H1 (cell line): ENCODE measurements at regions of chr6 and their contacts with region 1.

Region 1: DNA sequence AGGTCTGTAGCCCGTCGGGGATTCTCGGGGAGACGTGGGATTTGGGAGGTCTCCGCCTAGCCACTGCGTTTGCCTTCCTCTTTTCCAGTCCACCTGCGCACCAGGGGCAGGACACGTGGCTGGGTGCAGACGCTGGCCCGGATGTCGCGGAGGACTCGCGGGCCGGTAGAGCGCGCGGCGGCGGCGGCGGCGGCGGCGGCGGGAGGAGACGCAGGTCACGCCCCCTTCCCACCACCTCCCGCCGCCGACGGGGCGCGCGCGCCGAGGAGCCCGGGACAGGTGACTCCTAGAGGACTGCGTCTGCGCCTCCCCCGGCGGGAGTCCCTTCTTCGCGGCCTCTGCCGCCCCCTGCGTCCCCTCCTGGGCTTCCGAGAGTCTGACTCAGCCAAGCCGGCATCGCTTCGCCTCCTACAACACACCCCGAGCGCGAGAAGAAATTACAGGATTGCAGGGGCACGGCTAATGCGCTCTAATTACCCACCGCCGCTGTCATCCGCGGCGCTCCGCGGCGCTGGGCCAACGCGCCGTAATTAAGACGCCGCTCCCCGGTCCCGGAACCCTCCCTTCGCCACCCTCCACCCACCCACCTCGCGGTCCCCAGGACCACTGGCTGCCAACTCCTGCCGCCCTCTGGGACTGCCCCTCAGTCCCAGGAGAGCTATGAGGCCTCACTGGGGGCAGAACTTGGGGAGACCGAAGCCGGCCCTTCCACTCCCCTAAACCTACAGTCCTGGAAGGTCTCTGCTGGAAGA is 124.5 kb downstream of the MRPL14 start:
- DNase-seq: peak; percentile 44 to 86
- H3K4me3 ChIP-seq: peak overlapping the region; percentile 22 to 60 (median 37); a peak in 7 of 8 replicates
- H3K27ac ChIP-seq: peak overlapping the region; percentile 20; the same call in 1 of the 2 replicates
- H3K4me1 ChIP-seq: peaks cover 4 to 48% (median 38%) of the 10 kb centered on the region in 4 experiments
- H3K27me3 ChIP-seq: peaks cover 0 to 18% (median 9%) of the 10 kb centered on the region in 4 experiments; a peak in 5 of 7 replicates
- CTCF ChIP-seq: peak in 1 of 3 experiments; percentile 5; a peak in 2 of 4 replicates
- EP300 ChIP-seq: peak in 1 of 2 experiments; percentile 2; a peak in 1 of 3 replicates
- POLR2A ChIP-seq: no peak
- RAD21 ChIP-seq: peak in 1 of 2 experiments; percentile 17; a peak in 1 of 4 replicates

Region 2: DNA sequence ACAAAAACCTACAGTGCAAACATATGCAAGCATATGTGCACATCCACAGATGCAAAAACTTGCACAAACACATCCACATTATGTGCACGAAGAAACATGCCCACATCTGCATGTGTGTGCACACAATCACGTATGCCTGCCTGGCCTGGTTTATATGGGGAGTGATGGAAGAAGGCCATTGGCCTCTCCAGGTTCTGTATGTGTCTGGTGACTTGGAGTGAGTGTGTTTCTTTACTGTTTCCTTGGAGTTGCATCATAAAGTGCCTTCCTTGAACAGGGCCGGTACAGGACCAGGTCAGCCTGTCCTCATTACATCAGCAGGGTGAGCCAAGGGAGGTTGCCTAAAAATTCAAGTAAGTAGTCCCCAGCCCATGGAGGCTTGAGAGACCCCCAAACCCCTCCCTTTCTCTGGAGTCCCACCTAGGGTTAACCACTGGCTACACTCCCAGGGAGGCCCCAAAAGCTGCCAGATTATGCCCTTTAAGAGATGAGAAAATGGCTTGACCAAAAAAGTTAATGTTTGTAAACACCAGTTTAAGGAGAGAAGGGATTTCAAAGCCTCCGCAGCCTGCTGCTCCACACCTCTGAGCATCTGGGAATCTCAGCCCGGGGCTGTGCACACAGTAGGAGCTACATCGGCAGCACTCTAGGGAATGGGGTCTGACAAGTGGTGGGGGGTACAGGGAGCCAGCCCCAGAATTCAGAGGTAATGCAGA is 92.0 kb before region 1 on chr6:
- CTCF ChIA-PET with region 1: interaction called, 11 read pairs
- POLR2A ChIA-PET with region 1: no interaction called
- DNase-seq: no peak
- H3K4me3 ChIP-seq: no peak overlapping the region
- H3K27ac ChIP-seq: no peak overlapping the region
- H3K4me1 ChIP-seq: peaks cover 0 to 20% (median 11%) of the 10 kb centered on the region in 4 experiments; a peak in 6 of 7 replicates
- H3K27me3 ChIP-seq: no peaks in the 10 kb centered on the region
- CTCF ChIP-seq: no peak
- EP300 ChIP-seq: no peak
- POLR2A ChIP-seq: no peak
- RAD21 ChIP-seq: no peak

Region 3: GRCh38 chr6:43977404-43978111 is 25.2 kb before region 1 on chr6:
- CTCF ChIA-PET with region 1: interaction called, 19 read pairs
- POLR2A ChIA-PET with region 1: no interaction called
- DNase-seq: peak in 1 of 2 experiments; percentile 19
- H3K4me3 ChIP-seq: no peak overlapping the region
- H3K27ac ChIP-seq: no peak overlapping the region
- H3K4me1 ChIP-seq: no peaks in the 10 kb centered on the region
- H3K27me3 ChIP-seq: no peaks in the 10 kb centered on the region
- CTCF ChIP-seq: no peak
- EP300 ChIP-seq: no peak
- POLR2A ChIP-seq: no peak
- RAD21 ChIP-seq: no peak

Region 4: DNA sequence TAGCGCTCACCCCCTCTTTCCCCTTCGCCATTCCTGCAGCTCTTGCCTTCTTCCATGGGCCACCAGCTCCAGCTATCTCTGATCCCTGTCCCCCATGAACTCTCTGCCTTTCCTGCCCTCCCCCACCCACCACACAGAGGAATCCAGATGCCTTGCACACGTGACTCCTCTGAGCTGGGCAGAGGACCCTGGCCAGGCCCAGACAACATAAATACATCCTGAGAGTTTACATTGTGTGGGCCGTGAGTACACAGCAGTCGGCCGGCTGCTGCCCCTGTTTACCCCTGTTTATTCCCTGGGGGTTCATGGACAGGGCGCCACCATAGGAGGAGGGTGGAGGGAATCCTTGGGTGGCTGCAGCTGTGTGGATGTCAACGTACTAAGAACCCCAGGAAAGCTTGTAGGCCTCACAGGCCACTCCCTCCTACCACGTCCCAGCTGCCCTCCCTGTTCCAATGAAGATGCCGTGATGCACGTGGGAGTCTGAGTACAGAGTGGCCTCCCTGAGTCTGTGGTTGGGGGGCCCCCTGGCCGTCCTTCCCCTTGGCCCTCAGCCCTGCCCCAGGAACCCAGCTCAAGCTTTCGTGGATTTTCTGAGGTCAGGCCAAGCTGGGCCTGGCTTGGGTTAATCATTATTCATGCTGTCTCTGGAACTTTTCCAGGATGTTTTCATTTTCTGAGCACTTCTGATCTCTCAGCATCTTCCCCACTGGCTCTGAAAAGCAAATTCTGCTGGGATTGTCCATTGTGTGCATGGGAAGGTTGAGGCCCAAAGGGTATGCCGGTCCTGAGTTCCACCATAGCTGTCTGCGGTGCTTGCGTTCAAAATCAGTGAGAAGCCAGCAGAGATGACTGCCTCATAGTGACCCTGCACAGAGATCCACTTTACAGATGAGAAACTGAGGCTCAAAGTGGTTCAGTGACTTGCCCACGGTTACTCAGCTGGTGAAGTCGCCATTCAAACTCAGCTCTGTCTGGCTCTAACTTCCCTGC is 11.8 kb before region 1 on chr6:
- CTCF ChIA-PET with region 1: interaction called, 19 read pairs
- POLR2A ChIA-PET with region 1: interaction called, 7 read pairs
- DNase-seq: no peak
- H3K4me3 ChIP-seq: no peak overlapping the region
- H3K27ac ChIP-seq: no peak overlapping the region
- H3K4me1 ChIP-seq: peaks cover 0 to 16% (median 8%) of the 10 kb centered on the region in 4 experiments; a peak in 6 of 7 replicates
- H3K27me3 ChIP-seq: no peaks in the 10 kb centered on the region
- CTCF ChIP-seq: no peak
- EP300 ChIP-seq: no peak
- POLR2A ChIP-seq: no peak
- RAD21 ChIP-seq: no peak

Region 5: DNA sequence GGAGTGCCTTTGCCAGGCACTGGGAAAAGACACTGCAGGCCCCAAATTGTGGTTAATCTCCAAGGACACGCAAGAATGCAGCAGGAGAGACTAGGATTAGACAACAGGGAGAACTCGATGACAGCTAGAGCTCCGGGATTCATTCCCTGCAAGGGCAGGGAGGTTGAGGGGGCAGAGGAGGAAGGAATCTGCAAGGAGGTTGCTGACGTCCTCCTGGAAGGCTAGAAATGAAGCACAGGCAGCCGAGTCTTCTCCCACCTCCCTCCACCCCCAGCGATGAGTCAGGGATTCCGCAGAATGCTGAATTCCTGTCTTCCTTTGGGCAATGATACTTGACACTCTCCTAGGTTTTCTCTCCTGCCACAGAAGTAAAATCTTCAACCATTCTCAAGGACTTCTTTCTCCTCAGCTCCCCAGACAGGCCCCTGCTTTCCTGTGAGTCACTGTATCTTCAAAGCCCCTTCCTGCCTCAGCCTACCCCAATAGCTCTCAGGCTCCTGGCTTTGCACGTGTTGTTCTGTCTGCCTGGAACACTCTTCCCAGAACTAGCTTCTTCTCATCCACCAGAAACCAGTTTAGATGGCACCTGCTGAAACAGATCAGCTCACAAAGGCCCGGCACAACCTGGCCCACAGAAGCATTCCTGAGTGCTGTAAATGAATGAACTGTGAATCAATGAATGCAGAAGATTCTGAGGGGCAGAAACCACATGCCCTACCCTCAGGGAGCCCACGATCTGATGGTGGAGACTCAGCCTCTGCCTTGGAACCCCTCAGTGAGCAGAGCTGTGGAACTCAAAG is 38.9 kb after region 1 on chr6:
- CTCF ChIA-PET with region 1: interaction called, 331 read pairs
- POLR2A ChIA-PET with region 1: interaction called, 14 read pairs
- DNase-seq: peak in 1 of 2 experiments; percentile 68
- H3K4me3 ChIP-seq: no peak overlapping the region
- H3K27ac ChIP-seq: 0 out of 2 replicates have a peak overlapping the region, but pooled peaks have one; percentile 21
- H3K4me1 ChIP-seq: peaks cover 9 to 27% (median 15%) of the 10 kb centered on the region in 4 experiments
- H3K27me3 ChIP-seq: no peaks in the 10 kb centered on the region
- CTCF ChIP-seq: no peak
- EP300 ChIP-seq: no peak
- POLR2A ChIP-seq: no peak
- RAD21 ChIP-seq: no peak

Region 6: DNA sequence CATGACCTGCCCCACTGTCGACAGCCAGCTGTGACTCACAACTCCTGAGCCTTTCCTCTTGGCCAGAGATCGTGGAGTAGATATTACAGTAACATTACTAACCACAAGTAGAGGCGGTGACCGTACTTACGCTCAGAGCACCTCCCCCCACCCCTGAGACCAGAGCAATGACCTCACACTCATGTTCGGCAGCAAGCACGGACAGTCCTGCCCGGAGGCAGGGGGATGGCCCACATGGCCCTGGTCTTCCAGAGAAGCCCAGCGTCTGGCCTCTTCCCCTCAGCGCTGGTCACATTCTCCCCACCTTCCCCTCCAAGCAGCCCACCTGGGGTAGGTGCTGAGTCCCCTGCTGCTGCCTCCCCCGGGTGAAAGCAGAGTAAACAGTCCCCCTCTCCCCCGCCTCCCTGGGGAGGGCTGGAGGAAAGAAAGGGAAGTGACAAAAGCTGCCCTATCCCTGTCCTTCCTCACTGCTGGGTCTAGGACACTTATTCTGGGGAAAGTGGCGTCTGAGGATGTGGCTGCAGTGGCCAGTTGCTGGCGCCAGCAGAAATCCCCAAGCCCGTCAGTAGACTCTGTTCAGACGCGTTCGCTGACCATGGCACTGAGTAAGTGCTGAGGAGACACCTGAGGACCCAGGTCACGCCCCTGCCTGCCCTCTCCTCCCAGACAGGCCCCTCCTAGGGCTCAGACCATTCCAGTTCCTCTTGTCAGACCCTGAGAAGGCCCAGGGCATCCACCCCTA is 56.0 kb after region 1 on chr6:
- CTCF ChIA-PET with region 1: interaction called, 331 read pairs
- POLR2A ChIA-PET with region 1: interaction called, 4 read pairs
- DNase-seq: no peak
- H3K4me3 ChIP-seq: no peak overlapping the region
- H3K27ac ChIP-seq: no peak overlapping the region
- H3K4me1 ChIP-seq: peaks cover 0 to 4% (median 0%) of the 10 kb centered on the region in 4 experiments; a peak in 4 of 7 replicates
- H3K27me3 ChIP-seq: no peaks in the 10 kb centered on the region
- CTCF ChIP-seq: no peak
- EP300 ChIP-seq: no peak
- POLR2A ChIP-seq: no peak
- RAD21 ChIP-seq: no peak

Region 7: DNA sequence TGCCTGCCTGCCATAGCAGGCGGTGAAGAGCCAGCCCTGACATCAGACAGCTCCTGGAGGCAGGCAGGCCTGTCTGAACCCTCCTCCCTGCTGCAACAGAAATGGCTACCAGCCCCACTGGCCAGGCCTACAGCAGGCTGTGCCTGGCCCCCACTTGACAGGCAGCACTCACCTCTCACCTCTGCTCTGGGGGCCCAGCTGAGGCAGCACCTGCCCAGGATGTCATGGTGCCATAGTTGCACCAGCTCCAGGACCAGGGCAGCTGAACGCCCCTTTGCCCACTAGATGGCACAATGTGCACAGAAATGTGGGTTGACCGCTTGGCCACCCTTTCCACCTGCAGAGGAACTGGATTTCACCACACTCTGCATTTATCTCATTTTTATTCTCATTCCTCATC is 93.8 kb after region 1 on chr6:
- CTCF ChIA-PET with region 1: no interaction called
- POLR2A ChIA-PET with region 1: no interaction called
- DNase-seq: peak in 1 of 2 experiments; percentile 75
- H3K4me3 ChIP-seq: no peak overlapping the region
- H3K27ac ChIP-seq: no peak overlapping the region
- H3K4me1 ChIP-seq: no peaks in the 10 kb centered on the region
- H3K27me3 ChIP-seq: no peaks in the 10 kb centered on the region
- CTCF ChIP-seq: peak; percentile 87 to 97 (median 87)
- EP300 ChIP-seq: no peak
- POLR2A ChIP-seq: no peak
- RAD21 ChIP-seq: peak; percentile 89 to 90